A673 (cell line): ENCODE measurements at regions of chr5 and their contacts with region 1.

Region 1: DNA sequence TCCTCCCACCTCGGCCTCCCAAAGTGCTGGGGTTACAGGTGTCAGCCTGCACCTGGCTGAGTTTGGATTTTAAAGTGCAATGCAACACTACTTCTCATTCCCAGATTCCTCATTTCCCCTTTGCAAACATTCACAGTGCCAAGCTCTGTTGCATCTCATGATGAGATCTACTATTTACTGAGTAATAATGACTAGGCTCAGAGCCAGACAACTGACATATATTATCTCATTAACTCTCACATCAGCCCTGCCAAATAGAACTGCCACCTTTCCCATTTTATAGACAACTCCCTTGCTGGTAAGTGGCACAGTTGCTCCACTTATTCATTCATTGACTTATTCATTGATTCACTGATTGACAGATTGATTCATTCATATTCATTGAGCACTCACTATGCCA is 7.0 kb downstream of the PDE6A start:
- DNase-seq: peak; percentile 94
- H3K4me3 ChIP-seq: no peak overlapping the region
- H3K27ac ChIP-seq: peak overlapping the region; percentile 98
- H3K4me1 ChIP-seq: peaks cover 78% of the 10 kb centered on the region
- H3K27me3 ChIP-seq: no peaks in the 10 kb centered on the region
- CTCF ChIP-seq: no peak

Region 2: GRCh38 chr5:149517461-149518122 is 420.0 kb before region 1 on chr5:
- CTCF ChIA-PET with region 1: no interaction called
- POLR2A ChIA-PET with region 1: no interaction called
- intact Hi-C with region 1: no loop called
- DNase-seq: no peak
- H3K4me3 ChIP-seq: no peak overlapping the region
- H3K27ac ChIP-seq: peak overlapping the region; percentile 47
- H3K4me1 ChIP-seq: peaks cover 13% of the 10 kb centered on the region
- H3K27me3 ChIP-seq: no peaks in the 10 kb centered on the region
- CTCF ChIP-seq: no peak

Region 3: DNA sequence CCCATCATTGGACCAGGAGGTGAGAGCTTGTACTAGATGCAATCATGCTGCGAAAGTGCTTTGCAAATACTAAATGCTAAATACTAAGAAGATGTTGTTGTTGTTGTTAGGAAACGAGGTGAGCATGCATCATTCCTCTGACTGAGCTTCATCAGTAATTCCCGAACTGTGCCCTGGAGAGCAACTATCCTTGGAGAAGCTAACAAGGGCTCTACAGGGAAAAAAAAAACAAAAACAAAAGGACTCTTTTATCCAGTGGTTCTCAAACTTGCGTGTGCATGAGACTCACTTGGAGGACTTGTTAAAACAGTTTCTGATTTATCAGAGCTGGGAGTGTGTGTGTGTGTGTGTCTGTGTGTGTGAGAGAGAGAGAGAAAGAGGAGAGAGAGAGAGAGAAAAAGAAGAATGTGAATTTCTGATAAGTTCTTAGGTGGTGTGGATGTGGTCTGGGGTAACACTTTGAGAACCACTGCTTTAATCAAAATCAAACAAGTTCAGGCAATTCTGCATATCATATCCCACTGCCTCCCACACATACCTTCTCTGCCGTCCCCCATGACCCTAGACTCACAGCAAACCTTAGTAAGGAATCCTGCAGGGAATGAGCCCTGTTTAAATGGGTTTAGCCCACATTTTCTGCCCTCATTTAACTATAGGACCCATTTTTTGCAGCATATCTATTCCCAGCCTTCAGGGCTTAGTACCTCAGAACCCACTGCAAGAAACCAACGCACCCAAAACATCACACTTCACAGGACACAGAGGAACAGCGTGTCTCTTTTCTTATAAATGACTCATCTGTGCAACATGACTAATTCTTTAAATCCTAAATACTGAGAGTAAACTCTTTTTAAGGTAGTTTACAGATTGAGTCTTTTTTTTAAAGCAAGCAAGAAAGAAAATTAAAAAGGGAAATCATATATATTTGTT is 41.9 kb before region 1 on chr5:
- CTCF ChIA-PET with region 1: interaction called, 16 read pairs
- POLR2A ChIA-PET with region 1: no interaction called
- intact Hi-C with region 1: no loop called
- DNase-seq: no peak
- H3K4me3 ChIP-seq: no peak overlapping the region
- H3K27ac ChIP-seq: no peak overlapping the region
- H3K4me1 ChIP-seq: no peaks in the 10 kb centered on the region
- H3K27me3 ChIP-seq: no peaks in the 10 kb centered on the region
- CTCF ChIP-seq: no peak

Region 4: DNA sequence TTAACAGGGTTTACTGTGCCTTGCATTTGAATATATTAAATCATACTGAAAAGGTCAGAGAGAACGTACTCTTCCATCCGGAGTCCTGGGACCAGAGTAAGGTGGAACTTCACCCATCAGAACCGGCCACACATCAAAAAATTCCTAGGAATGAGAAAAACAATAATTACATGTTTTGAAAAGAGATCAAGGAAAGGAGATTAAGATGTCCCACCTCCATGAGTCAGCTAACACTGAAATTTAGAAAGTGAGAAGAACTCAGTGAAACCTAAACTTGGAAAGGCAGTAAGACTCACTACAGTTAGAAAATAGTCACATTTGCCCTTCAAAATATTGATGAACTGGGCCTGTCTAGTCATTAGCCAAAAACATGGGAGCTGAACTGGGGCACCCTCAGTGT is 16.1 kb before region 1 on chr5:
- CTCF ChIA-PET with region 1: interaction called, 3 read pairs
- POLR2A ChIA-PET with region 1: interaction called, 10 read pairs
- intact Hi-C with region 1: loop called (anchors 1 kb)
- DNase-seq: peak; percentile 35
- H3K4me3 ChIP-seq: no peak overlapping the region
- H3K27ac ChIP-seq: peak overlapping the region; percentile 91
- H3K4me1 ChIP-seq: peaks cover 22% of the 10 kb centered on the region
- H3K27me3 ChIP-seq: no peaks in the 10 kb centered on the region
- CTCF ChIP-seq: no peak

Region 5: GRCh38 chr5:149960272-149961185 is 22.9 kb after region 1 on chr5 and contains the start of gene SLC26A2:
- CTCF ChIA-PET with region 1: interaction called, 12 read pairs
- POLR2A ChIA-PET with region 1: interaction called, 4 read pairs
- intact Hi-C with region 1: loop called (anchors 2 kb)
- DNase-seq: peak; percentile 99
- H3K4me3 ChIP-seq: peak within 1 kb of the TSS; percentile 85
- H3K27ac ChIP-seq: peak within 1 kb of the TSS; percentile 92
- H3K4me1 ChIP-seq: peaks cover 28% of the 10 kb centered on the region
- H3K27me3 ChIP-seq: no peaks in the 10 kb centered on the region
- CTCF ChIP-seq: no peak
- total RNA-seq, gene SLC26A2: 83.0 and 96.6 TPM in 2 replicates